PC-3 (cell line): ENCODE measurements at regions of chr2 and their contacts with region 1.

Region 1: DNA sequence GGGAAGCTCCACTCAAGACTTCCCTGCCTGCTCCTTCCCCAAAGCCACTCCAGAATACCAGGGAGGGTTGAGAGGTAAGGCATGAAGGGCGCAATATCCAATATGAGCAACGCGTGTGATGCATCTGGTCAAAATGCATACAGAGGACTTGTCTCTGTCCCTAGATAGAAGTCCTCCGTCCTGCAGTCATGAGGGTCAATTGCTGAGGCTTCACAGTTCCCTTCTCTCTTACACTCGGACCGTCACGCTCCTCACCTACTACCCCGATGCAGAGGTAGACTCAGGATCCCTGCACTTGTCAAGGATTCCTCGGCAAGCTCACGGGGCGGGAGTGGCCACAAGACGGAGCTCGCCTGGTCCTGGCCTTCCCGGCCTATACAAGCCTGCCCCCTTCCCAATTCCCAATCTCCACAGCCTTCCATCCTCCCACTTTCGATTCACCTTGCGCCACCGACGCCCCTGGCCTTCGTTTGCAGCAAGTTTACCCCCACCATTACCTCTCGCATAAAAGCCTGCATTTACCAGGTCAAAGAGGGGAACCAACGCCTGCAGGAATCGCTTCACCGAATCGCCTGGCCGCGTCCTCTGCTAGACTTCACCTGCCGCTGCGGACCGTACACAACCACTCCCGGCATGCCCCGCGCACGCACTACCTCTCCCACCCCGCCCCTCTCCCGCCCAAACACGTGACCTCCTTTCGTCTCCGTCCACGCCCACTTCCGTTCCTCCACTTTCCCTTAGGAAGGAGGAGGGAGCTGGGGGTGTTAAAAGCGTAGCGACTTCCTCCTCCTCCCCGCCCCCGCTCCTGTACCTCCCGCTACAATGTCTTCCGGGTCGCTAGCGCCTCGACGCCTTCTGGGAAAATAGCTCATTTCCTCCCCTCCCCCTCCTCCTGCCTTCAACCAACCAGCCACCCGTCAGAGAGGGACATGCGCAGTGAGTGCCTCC is at the start of gene ORC4:
- DNase-seq: peak; percentile 99
- ATAC-seq: peak; percentile 87
- H3K4me3 ChIP-seq: peak within 1 kb of the TSS; percentile 99
- H3K27ac ChIP-seq: peak within 1 kb of the TSS; percentile 59
- H3K4me1 ChIP-seq: peaks cover 25% of the 10 kb centered on the region; the same call in 1 of the 2 replicates
- H3K27me3 ChIP-seq: no peaks in the 10 kb centered on the region
- CTCF ChIP-seq: peak; percentile 62
- total RNA-seq, gene ORC4: 34.6 and 65.9 TPM in 2 replicates

Region 2: DNA sequence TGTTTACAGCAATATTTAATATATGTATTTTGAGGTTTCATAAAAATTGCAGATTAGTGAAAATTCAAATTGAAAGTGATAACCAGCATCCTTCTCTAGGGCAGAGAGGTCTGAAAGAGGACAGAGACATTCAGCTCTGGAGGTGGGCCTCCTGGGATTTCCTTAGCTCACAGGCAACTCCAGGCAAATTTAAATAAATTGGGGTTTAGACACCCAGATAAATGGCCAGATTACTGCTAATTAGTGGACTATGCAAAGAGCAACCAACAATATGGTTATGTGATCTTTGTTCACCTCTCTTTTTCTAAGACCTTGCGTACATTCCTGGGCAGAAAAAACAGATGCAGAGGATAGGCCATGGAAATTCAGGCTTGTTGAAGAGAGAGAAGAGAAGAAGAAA is 1458.4 kb before region 1 on chr2:
- CTCF ChIA-PET with region 1: no interaction called
- POLR2A ChIA-PET with region 1: interaction called, 17 read pairs
- intact Hi-C with region 1: no loop called
- DNase-seq: no peak
- ATAC-seq: no peak
- H3K4me3 ChIP-seq: no peak overlapping the region
- H3K27ac ChIP-seq: no peak overlapping the region
- H3K4me1 ChIP-seq: no peaks in the 10 kb centered on the region
- H3K27me3 ChIP-seq: no peaks in the 10 kb centered on the region
- CTCF ChIP-seq: no peak

Region 3: DNA sequence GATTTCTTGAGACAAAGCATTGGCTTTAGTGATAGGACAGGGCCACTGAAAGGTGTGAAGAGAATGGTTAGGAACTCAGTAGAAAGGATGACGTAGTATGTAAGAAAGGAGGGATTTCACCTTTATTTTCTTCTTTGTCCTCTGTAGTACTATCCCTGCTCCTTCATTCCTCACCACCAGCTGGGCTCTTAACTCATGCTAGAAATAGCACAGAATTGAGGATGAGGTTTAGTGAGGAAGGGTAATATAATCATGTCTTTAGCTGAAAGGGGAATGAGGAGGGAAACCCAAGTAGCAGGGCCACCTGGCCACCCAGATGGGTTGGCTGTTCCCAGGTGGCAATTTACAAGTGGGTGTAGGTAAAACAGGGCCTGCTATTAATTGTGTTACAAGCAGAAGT is 160.4 kb before region 1 on chr2:
- CTCF ChIA-PET with region 1: no interaction called
- POLR2A ChIA-PET with region 1: no interaction called
- intact Hi-C with region 1: no loop called
- DNase-seq: no peak
- ATAC-seq: no peak
- H3K4me3 ChIP-seq: no peak overlapping the region
- H3K27ac ChIP-seq: no peak overlapping the region
- H3K4me1 ChIP-seq: peaks cover 14% of the 10 kb centered on the region; the same call in 1 of the 2 replicates
- H3K27me3 ChIP-seq: no peaks in the 10 kb centered on the region
- CTCF ChIP-seq: no peak

Region 4: DNA sequence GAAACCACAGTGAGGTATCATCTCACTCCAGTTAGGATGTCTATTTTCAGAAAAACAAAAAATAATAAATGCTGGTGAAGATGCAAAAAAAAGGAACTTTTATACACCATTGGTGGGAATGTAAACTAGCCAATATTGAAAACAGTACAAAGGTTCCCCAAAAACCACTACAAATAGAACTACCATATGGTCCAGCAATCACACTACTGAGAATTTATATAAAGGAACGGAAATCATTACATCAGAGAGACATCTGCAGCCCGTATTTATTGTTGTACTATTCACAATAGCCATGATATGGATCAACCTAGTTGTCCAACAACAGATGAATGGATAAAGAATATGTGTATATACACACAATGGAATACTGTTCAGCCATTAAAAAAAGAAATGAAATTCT is 51.8 kb before region 1 on chr2:
- CTCF ChIA-PET with region 1: no interaction called
- POLR2A ChIA-PET with region 1: no interaction called
- intact Hi-C with region 1: loop called (anchors 1 kb)
- DNase-seq: no peak
- ATAC-seq: no peak
- H3K4me3 ChIP-seq: no peak overlapping the region
- H3K27ac ChIP-seq: no peak overlapping the region
- H3K4me1 ChIP-seq: no peaks in the 10 kb centered on the region
- H3K27me3 ChIP-seq: no peaks in the 10 kb centered on the region
- CTCF ChIP-seq: no peak

Region 5: GRCh38 chr2:148042219-148042618 is 21.8 kb after region 1 on chr2:
- CTCF ChIA-PET with region 1: no interaction called
- POLR2A ChIA-PET with region 1: interaction called, 21 read pairs
- intact Hi-C with region 1: no loop called
- DNase-seq: no peak
- ATAC-seq: no peak
- H3K4me3 ChIP-seq: no peak overlapping the region
- H3K27ac ChIP-seq: no peak overlapping the region
- H3K4me1 ChIP-seq: peaks cover 6% of the 10 kb centered on the region; the same call in 1 of the 2 replicates
- H3K27me3 ChIP-seq: no peaks in the 10 kb centered on the region
- CTCF ChIP-seq: no peak

Region 6: DNA sequence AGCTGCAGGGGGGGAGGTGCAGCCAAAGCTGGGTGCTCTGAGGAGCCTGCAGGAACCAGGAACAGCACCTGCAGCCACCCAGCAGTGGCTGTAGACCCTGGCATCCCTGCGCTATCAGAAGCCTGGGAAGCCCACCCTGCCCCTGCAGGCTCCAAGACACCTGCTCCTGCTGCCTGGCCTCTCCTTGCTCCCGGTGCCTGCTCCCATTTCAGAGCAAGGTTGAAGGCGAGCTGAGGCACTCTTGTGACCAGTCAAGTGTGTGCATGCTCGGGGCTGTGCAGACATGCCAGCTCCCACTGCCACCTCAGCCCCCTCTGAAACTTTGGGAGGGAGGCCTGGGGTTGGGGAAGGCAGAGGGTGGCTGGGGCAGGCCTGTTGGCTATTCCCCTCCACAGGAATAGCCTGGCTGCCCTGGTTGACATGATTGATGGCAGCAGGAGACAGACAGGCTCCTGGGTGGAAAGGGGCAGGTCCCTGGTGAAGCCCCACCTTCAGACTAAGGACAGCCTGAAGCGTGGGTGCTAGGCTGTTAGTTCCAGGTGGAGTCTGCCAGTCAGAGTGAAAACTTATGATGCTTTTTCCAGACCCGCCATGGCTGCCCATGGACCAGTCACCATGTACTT is 151.9 kb after region 1 on chr2:
- CTCF ChIA-PET with region 1: no interaction called
- POLR2A ChIA-PET with region 1: interaction called, 14 read pairs
- intact Hi-C with region 1: no loop called
- DNase-seq: no peak
- ATAC-seq: no peak
- H3K4me3 ChIP-seq: no peak overlapping the region
- H3K27ac ChIP-seq: no peak overlapping the region
- H3K4me1 ChIP-seq: no peaks in the 10 kb centered on the region
- H3K27me3 ChIP-seq: no peaks in the 10 kb centered on the region
- CTCF ChIP-seq: no peak

Region 7: GRCh38 chr2:148509288-148509902 is 489.0 kb after region 1 on chr2:
- CTCF ChIA-PET with region 1: interaction called, 18 read pairs
- POLR2A ChIA-PET with region 1: interaction called, 4 read pairs
- intact Hi-C with region 1: loop called (anchors 1 kb)
- DNase-seq: peak; percentile 90
- ATAC-seq: peak; percentile 100
- H3K4me3 ChIP-seq: peak overlapping the region; percentile 65
- H3K27ac ChIP-seq: no peak overlapping the region
- H3K4me1 ChIP-seq: peaks cover 5% of the 10 kb centered on the region; the same call in 1 of the 2 replicates
- H3K27me3 ChIP-seq: no peaks in the 10 kb centered on the region
- CTCF ChIP-seq: peak; percentile 94

Region 8: GRCh38 chr2:148644883-148645538 is 624.6 kb after region 1 on chr2:
- CTCF ChIA-PET with region 1: interaction called, 12 read pairs
- POLR2A ChIA-PET with region 1: no interaction called
- intact Hi-C with region 1: loop called (anchors 5 kb)
- DNase-seq: peak; percentile 92
- ATAC-seq: peak; percentile 70
- H3K4me3 ChIP-seq: peak overlapping the region; percentile 92
- H3K27ac ChIP-seq: peak overlapping the region; percentile 76
- H3K4me1 ChIP-seq: peaks cover 11% of the 10 kb centered on the region
- H3K27me3 ChIP-seq: no peaks in the 10 kb centered on the region
- CTCF ChIP-seq: peak; percentile 42; the same call in 1 of the 2 replicates